CD8-positive, alpha-beta T cell (primary cell): ENCODE measurements at regions of chr5 and their contacts with region 1.

Region 1: DNA sequence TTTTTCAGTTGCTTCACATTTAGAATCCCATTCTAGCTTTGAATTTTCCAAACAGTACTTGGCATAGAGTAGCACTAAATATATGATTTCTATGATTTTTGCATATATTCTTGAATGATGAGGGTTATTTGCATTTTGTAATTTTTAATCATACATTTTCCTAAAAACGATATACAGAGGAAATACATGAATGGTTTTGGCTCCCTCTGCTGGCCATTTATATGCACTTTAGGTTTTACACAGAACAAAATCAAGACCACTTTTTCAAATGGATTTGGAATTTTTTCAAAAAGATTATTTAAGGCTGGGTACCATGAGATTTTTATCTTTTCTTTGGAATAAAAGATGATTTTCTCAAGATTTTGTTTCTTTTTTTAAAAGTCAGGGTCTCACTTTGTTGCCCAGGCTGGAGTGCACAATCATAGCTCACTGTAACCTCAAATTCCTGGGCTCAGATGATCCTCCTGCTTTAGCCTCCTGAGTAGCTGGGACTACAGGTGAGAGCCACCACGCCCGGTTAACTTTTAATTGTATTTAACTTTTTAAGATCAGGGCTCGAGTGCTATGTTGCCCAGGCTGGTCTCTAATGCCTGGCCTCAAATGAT is 16.7 kb upstream of the COMMD10 start:
- DNase-seq: peak in 5 of 9 experiments; percentile 14 to 76 (median 30)
- ATAC-seq: no peak
- H3K4me3 ChIP-seq: no peak overlapping the region
- H3K4me3 Mint-ChIP-seq: no peak overlapping the region
- H3K27ac ChIP-seq: no peak overlapping the region
- H3K27ac Mint-ChIP-seq: no peak overlapping the region
- H3K4me1 ChIP-seq: no peaks in the 10 kb centered on the region
- H3K4me1 Mint-ChIP-seq: no peaks in the 10 kb centered on the region
- H3K27me3 ChIP-seq: peaks cover 0 to 4% of the 10 kb centered on the region in 2 experiments
- H3K27me3 Mint-ChIP-seq: peaks cover 24% of the 10 kb centered on the region
- CTCF ChIP-seq: peak; percentile 97

Region 2: GRCh38 chr5:114361724-114362196 is 1706.4 kb before region 1 on chr5 and contains the start of gene KCNN2:
- CTCF ChIA-PET with region 1: no interaction called
- POLR2A ChIA-PET with region 1: no interaction called
- intact Hi-C with region 1: no loop called
- DNase-seq: no peak
- ATAC-seq: no peak
- H3K4me3 ChIP-seq: no peak within 1 kb of the TSS
- H3K4me3 Mint-ChIP-seq: no peak within 1 kb of the TSS
- H3K27ac ChIP-seq: no peak within 1 kb of the TSS
- H3K27ac Mint-ChIP-seq: no peak within 1 kb of the TSS
- H3K4me1 ChIP-seq: no peaks in the 10 kb centered on the region
- H3K4me1 Mint-ChIP-seq: no peaks in the 10 kb centered on the region
- H3K27me3 ChIP-seq: peaks cover 7 to 12% of the 10 kb centered on the region in 2 experiments
- H3K27me3 Mint-ChIP-seq: peaks cover 43% of the 10 kb centered on the region
- CTCF ChIP-seq: no peak
- total RNA-seq, gene KCNN2: not detected

Region 3: GRCh38 chr5:115634343-115635132 is 433.6 kb before region 1 on chr5:
- CTCF ChIA-PET with region 1: interaction called, 23 read pairs
- POLR2A ChIA-PET with region 1: no interaction called
- intact Hi-C with region 1: loop called (anchors 1 kb)
- DNase-seq: peak; percentile 57 to 88 (median 80)
- ATAC-seq: peak; percentile 93
- H3K4me3 ChIP-seq: peak overlapping the region; percentile 19 to 37
- H3K4me3 Mint-ChIP-seq: peak overlapping the region; percentile 82
- H3K27ac ChIP-seq: peak overlapping the region in 1 of 2 experiments; percentile 31
- H3K27ac Mint-ChIP-seq: peak overlapping the region; percentile 69
- H3K4me1 ChIP-seq: no peaks in the 10 kb centered on the region
- H3K4me1 Mint-ChIP-seq: peaks cover 10% of the 10 kb centered on the region
- H3K27me3 ChIP-seq: no peaks in the 10 kb centered on the region
- H3K27me3 Mint-ChIP-seq: no peaks in the 10 kb centered on the region
- CTCF ChIP-seq: peak; percentile 96

Region 4: GRCh38 chr5:115888027-115888426 is 180.1 kb before region 1 on chr5:
- CTCF ChIA-PET with region 1: interaction called, 4 read pairs
- POLR2A ChIA-PET with region 1: no interaction called
- intact Hi-C with region 1: loop called (anchors 5 to 10 kb)
- DNase-seq: peak in 2 of 9 experiments; percentile 2 to 6
- ATAC-seq: no peak
- H3K4me3 ChIP-seq: no peak overlapping the region
- H3K4me3 Mint-ChIP-seq: no peak overlapping the region
- H3K27ac ChIP-seq: no peak overlapping the region
- H3K27ac Mint-ChIP-seq: no peak overlapping the region
- H3K4me1 ChIP-seq: no peaks in the 10 kb centered on the region
- H3K4me1 Mint-ChIP-seq: no peaks in the 10 kb centered on the region
- H3K27me3 ChIP-seq: no peaks in the 10 kb centered on the region
- H3K27me3 Mint-ChIP-seq: no peaks in the 10 kb centered on the region
- CTCF ChIP-seq: no peak